Activated T-helper 2 cell treated with anti-CD3 and anti-CD28 coated beads, Interferon-gamma antibody, Interleukin-2, Interleukin-4, amounts not matched to agents 10 μg/mL and 5 μg/mL and 100 μg/mL, durations not matched to agents 14 hours and 24 hours and 36 hours (primary cell): ENCODE measurements at regions of chr14 and their contacts with region 1.

Region 1: GRCh38 chr14:75566321-75566720 is 12.1 kb upstream of the FLVCR2 start:
- DNase-seq: peak; percentile 72
- H3K4me3 Mint-ChIP-seq: peak overlapping the region; percentile 47
- H3K27ac Mint-ChIP-seq: peak overlapping the region; percentile 85
- H3K4me1 Mint-ChIP-seq: peaks cover 65% of the 10 kb centered on the region
- H3K27me3 Mint-ChIP-seq: no peaks in the 10 kb centered on the region

Region 2: GRCh38 chr14:75427482-75428229 is 138.7 kb before region 1 on chr14 and contains the start of gene JDP2:
- intact Hi-C with region 1: loop called (anchors 5 kb)
- DNase-seq: peak; percentile 16
- H3K4me3 Mint-ChIP-seq: peak within 1 kb of the TSS; percentile 77
- H3K27ac Mint-ChIP-seq: no peak within 1 kb of the TSS
- H3K4me1 Mint-ChIP-seq: peaks cover 15% of the 10 kb centered on the region
- H3K27me3 Mint-ChIP-seq: peaks cover 8% of the 10 kb centered on the region
- total RNA-seq, gene JDP2: 1.1 and 1.4 TPM in 2 replicates